Activated T-helper 1 cell treated with anti-CD3 and anti-CD28 coated beads, Interleukin-12 subunit alpha, Interleukin-12 subunit beta, Interleukin-2, Interleukin-4 antibody, amounts not matched to agents 30 ng/mL and 10 ng/mL and 1 ng/mL, durations not matched to agents 14 hours and 24 hours and 36 hours (primary cell): ENCODE measurements at regions of chr16 and their contacts with region 1.

Region 1: DNA sequence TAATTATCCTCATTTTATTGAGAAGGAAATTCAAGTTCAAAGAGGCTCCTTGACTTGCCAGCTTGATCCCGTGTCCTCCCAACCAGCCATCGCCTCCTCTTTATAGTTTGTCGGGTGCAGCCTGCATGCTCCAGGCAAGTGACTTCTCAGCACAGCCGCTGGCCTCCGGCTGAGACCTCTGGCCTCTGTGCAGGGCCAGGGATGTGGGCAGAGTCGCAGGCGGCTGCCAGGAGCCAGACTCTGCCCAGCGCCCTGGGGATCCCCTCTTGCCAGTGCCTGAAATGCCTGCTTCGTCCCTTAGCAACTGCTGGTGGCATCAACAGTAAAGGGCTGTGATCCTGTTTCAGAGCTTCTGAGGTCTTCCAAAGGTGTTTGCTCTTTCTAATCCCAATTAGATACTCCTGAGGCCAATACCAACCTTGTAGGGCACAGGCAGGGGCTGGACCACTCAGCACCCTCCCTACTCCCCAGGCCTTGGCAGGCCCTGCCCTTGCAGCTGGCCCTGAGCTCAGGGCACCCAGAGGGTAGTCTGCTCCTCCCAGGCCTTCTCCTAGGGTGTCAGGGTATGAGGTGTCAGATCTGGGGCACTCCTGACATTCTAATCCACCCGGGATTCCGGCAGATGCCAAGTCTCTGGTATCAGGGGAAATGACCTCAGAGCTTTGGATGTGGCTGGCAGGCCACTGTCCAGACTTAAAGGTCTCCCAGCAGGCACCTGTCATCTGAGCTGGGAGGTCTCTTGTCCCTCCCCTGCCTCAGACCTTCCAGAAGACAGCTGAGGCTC is 68.0 kb upstream of the SIAH1 start:
- DNase-seq: no peak
- H3K4me3 Mint-ChIP-seq: no peak overlapping the region
- H3K27ac Mint-ChIP-seq: no peak overlapping the region
- H3K4me1 Mint-ChIP-seq: peaks cover 5% of the 10 kb centered on the region
- H3K27me3 Mint-ChIP-seq: peaks cover 14% of the 10 kb centered on the region

Region 2: DNA sequence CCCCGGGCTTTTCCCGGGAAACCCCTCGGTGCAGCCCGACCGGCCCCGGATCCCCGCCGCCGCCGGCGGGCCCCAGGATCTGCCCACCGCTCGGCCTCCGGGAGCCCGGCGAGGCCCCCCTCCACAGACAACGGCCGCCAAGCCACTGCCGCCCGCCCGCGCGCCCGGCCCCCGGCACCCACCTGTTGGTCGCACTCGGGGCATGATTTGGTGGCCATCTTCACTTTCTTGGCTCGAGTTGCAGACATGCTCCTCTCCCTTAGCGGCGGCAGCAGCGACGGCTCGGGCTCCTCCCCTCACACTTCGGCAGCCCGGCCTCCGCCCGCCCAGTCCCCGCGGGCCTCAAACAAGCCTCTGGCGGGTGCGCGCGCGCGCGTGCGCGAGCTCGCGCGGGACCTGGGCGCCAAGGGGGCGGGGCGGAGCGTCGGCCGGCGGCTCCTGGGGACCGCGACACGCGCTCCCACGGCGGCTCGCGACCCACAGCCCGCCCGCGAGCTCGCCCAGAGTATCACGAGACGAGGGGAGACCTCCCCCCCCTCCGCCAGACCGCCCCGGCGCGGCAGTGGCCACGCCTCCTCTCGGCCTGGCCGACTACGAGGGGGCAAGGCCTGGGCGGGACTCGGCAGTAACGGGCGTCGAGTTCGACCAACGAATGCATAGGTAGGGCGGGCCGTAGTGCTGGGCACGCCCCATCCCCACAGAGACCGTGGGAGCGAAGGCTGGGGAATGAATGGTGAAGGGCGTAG is 1622.1 kb before region 1 on chr16 and contains the start of gene C16orf87:
- intact Hi-C with region 1: loop called (anchors 1 kb)
- DNase-seq: peak; percentile 90
- H3K4me3 Mint-ChIP-seq: peak within 1 kb of the TSS; percentile 97
- H3K27ac Mint-ChIP-seq: peak within 1 kb of the TSS; percentile 98
- H3K4me1 Mint-ChIP-seq: peaks cover 40% of the 10 kb centered on the region
- H3K27me3 Mint-ChIP-seq: peaks cover 10% of the 10 kb centered on the region
- total RNA-seq, gene C16orf87: 40.8 and 44.5 TPM in 2 replicates

Region 3: GRCh38 chr16:48353565-48354163 is 99.5 kb before region 1 on chr16:
- intact Hi-C with region 1: loop called (anchors 1 kb)
- DNase-seq: peak; percentile 62
- H3K4me3 Mint-ChIP-seq: no peak overlapping the region
- H3K27ac Mint-ChIP-seq: peak overlapping the region; percentile 32
- H3K4me1 Mint-ChIP-seq: peaks cover 15% of the 10 kb centered on the region
- H3K27me3 Mint-ChIP-seq: no peaks in the 10 kb centered on the region

Region 4: DNA sequence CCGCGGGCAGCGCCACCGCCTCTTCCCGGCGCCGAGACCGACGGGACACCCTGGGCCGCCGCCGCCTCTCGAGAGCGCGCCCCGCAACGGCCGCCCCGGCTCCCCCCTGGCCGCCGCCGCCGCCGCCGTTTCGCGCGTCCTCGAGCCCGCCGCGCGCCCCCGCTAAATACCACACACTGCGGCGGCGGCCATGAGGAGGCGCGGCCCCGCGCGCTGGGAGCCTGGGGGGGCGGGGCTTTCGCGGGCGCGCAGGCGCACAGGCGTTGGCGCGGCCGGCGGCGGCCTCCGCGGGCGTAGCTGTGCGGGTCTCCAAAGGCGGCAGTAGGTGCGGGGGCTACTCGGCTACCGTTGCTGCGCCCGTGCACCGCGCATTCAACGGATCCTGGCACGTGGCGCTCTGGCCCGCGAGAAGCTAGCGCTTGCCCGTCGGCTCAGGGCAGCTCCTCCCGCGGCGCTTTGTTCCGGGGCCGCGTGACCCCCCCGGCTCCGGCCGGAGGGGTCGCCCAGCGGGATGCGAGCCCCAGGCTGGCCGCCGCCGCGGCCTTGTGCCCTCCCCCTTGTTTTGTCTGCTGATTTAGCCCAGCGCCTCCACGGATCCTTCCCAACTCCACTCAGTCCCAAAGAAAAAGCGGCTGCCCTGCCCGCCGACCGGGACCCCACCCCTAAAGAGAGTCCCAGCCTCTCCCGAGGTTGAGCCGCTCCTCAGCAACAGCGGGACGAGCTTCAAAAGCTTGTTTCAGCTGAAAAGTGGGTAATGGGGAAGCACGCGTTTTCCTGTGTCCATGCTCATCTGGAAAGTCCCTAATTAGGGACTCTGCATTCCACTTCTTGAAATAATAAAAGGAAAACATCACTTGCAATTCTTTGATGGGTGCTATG is 67.7 kb before region 1 on chr16 and contains the start of gene SIAH1:
- intact Hi-C with region 1: loop called (anchors 1 kb)
- DNase-seq: peak; percentile 85
- H3K4me3 Mint-ChIP-seq: peak within 1 kb of the TSS; percentile 97
- H3K27ac Mint-ChIP-seq: peak within 1 kb of the TSS; percentile 95
- H3K4me1 Mint-ChIP-seq: peaks cover 29% of the 10 kb centered on the region
- H3K27me3 Mint-ChIP-seq: peaks cover 3% of the 10 kb centered on the region
- total RNA-seq, gene SIAH1: 15.6 and 16.8 TPM in 2 replicates

Region 5: GRCh38 chr16:48556913-48557351 is 103.8 kb after region 1 on chr16:
- intact Hi-C with region 1: loop called (anchors 1 kb)
- DNase-seq: peak; percentile 20
- H3K4me3 Mint-ChIP-seq: peak overlapping the region; percentile 62
- H3K27ac Mint-ChIP-seq: peak overlapping the region; percentile 92
- H3K4me1 Mint-ChIP-seq: peaks cover 86% of the 10 kb centered on the region
- H3K27me3 Mint-ChIP-seq: no peaks in the 10 kb centered on the region